Activated naive CD4-positive, alpha-beta T cell treated with anti-CD3 and anti-CD28 coated beads for 36 hours (primary cell): ENCODE measurements at regions of chr2 and their contacts with region 1.

Region 1: DNA sequence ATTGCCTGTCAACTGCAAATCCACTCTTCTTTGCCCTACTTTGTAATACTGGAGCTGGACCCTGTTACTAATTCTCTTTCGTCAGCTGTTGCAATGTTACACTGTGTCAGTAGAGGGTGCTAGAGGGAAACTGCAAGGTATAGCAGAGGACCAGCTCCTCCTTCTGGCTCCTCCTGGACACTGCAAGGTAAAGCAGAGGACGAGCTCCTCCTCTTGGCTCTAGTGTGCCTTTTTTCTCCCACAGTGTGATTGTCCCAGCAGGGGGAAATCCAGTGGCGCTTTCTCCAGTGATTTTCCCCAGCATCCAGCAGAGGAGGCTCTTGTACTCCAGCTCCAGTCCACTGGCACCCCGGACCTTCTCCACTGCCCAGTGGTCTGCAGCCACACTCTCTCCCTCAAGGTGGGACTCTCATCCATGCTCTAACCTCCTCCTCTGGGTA is 95.6 kb downstream of the CAPN13 start:
- DNase-seq: peak; percentile 95
- H3K4me3 Mint-ChIP-seq: no peak overlapping the region
- H3K27ac Mint-ChIP-seq: no peak overlapping the region
- H3K4me1 Mint-ChIP-seq: peaks cover 4% of the 10 kb centered on the region
- H3K27me3 Mint-ChIP-seq: no peaks in the 10 kb centered on the region

Region 2: DNA sequence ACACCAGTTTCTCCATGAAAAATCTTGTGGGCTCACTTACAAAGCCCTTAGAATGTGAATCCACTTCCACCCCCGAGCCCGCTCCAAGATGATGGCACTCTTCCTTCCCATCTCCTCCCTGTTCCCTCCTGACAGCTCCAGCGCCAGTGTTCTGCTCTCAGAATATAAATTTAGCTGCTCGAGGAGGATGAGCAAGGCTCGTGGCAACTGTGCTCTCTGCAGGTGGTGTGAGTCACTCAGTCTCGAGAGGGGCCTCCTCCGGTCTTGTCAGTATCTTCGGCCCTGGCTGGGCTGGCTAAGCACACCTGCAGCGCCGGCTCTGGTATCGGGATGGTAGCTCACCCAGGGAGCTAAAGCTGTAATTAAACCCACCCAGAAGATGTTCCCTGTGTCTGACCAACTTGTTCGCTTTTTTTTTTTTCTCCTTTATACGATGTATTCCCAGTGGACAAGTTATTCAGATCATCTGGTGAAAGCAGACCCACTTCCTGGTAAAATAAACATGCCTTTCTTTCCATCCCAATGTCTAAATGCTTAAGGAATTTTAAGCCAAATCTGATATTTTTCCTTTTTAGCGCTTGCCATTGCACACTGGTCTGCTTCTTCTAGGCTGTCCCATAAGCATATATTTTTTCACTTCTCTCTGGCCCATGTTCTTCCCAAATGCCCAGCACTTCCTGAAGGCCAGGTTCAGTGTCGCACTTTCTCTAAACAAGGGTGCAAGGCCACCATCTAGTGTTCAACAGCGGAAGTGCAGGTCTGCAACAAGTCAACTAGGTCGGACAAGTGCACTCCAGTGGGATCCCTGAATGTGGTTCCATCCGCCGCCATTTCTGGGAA is 596.3 kb before region 1 on chr2:
- CTCF ChIA-PET with region 1: interaction called, 18 read pairs
- intact Hi-C with region 1: no loop called
- DNase-seq: peak; percentile 85
- H3K4me3 Mint-ChIP-seq: no peak overlapping the region
- H3K27ac Mint-ChIP-seq: no peak overlapping the region
- H3K4me1 Mint-ChIP-seq: peaks cover 4% of the 10 kb centered on the region
- H3K27me3 Mint-ChIP-seq: no peaks in the 10 kb centered on the region

Region 3: DNA sequence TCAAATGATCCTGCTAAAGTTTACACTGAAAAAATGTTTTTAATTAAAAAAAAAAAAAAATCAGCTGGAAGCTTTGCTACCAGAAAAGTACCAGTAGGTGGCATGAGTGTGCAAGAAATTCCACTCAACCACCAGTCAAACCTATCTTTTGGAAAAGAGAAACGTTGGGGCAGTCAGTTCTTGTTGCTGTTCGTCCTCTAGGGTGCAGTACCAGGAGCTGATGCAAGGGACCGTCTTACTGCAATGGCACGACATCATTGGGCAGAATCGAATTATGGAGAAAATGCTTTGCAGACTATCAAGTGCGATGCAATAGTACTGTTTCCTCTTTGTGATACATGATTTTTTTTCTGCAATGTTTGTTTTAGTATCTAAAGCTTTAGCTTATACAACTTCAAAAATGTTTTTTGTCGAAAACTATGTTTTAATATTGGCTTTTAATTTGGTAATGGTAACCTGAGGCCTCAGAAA is 546.6 kb before region 1 on chr2:
- CTCF ChIA-PET with region 1: interaction called, 458 read pairs
- intact Hi-C with region 1: loop called (anchors 1 kb)
- DNase-seq: peak; percentile 77
- H3K4me3 Mint-ChIP-seq: no peak overlapping the region
- H3K27ac Mint-ChIP-seq: no peak overlapping the region
- H3K4me1 Mint-ChIP-seq: peaks cover 6% of the 10 kb centered on the region
- H3K27me3 Mint-ChIP-seq: no peaks in the 10 kb centered on the region

Region 4: GRCh38 chr2:30336978-30337841 is 374.5 kb before region 1 on chr2:
- CTCF ChIA-PET with region 1: interaction called, 11 read pairs
- intact Hi-C with region 1: loop called (anchors 1 kb)
- DNase-seq: peak; percentile 85
- H3K4me3 Mint-ChIP-seq: peak overlapping the region; percentile 58
- H3K27ac Mint-ChIP-seq: peak overlapping the region; percentile 92
- H3K4me1 Mint-ChIP-seq: peaks cover 77% of the 10 kb centered on the region
- H3K27me3 Mint-ChIP-seq: no peaks in the 10 kb centered on the region

Region 5: DNA sequence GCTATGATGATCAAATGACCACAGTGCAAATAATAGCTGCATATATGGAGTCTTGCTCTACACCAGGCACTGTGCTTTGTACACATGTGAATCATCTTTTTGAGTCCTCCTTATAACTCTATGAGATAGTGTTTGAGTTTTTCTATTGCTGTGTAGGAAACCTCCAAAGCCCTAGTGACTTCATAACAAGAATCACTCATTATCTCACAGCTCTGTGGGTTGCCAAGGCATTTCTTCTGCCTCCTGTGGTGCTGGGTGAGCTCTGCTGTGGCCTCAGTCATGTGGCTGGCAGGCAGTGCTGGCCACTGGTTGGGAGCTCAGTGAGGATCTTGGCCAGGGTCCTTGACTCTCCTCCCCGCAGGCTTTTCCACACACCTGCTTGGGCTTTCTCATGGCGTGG is 57.8 kb before region 1 on chr2:
- CTCF ChIA-PET with region 1: interaction called, 15 read pairs
- intact Hi-C with region 1: no loop called
- DNase-seq: no peak
- H3K4me3 Mint-ChIP-seq: no peak overlapping the region
- H3K27ac Mint-ChIP-seq: no peak overlapping the region
- H3K4me1 Mint-ChIP-seq: no peaks in the 10 kb centered on the region
- H3K27me3 Mint-ChIP-seq: no peaks in the 10 kb centered on the region

Region 6: GRCh38 chr2:30721668-30722647 is 10.3 kb after region 1 on chr2:
- CTCF ChIA-PET with region 1: interaction called, 33 read pairs
- intact Hi-C with region 1: no loop called
- DNase-seq: no peak
- H3K4me3 Mint-ChIP-seq: no peak overlapping the region
- H3K27ac Mint-ChIP-seq: no peak overlapping the region
- H3K4me1 Mint-ChIP-seq: no peaks in the 10 kb centered on the region
- H3K27me3 Mint-ChIP-seq: peaks cover 7% of the 10 kb centered on the region

Region 7: GRCh38 chr2:30780776-30781330 is 69.2 kb after region 1 on chr2:
- CTCF ChIA-PET with region 1: no interaction called
- intact Hi-C with region 1: no loop called
- DNase-seq: no peak
- H3K4me3 Mint-ChIP-seq: no peak overlapping the region
- H3K27ac Mint-ChIP-seq: no peak overlapping the region
- H3K4me1 Mint-ChIP-seq: peaks cover under 1% of the 10 kb centered on the region
- H3K27me3 Mint-ChIP-seq: peaks cover 5% of the 10 kb centered on the region

Region 8: DNA sequence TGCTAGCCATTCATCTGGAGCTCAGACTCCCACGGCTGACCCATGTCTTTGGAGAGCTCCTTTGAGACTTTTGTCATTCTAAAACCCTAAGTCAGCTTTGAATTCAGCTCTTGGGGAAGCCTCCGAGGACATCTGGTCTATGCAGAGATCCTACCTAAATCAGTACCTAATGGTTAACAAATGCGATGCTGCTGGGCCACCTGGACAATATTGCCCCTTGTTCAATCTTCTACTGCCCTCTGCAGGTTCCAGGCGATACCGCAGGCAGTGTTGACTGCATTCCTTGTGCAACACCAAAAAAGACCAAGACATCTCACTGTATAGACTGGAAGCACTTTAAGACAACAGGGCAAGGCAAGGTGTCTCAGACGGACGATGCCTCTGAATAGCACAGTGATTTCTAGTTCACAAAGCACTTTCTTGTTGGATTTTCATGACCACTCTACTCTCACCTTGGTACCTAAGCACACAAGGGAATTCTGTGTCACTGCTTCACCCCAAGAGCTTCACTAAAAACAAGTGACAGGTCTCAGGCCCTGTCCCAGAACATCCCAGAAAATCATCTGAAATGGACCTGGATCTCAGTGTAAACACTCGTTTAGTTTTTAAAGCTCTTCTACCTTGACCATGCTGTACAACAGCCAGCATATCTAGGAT is 622.0 kb after region 1 on chr2:
- CTCF ChIA-PET with region 1: interaction called, 31 read pairs
- intact Hi-C with region 1: loop called (anchors 1 kb)
- DNase-seq: peak; percentile 89
- H3K4me3 Mint-ChIP-seq: no peak overlapping the region
- H3K27ac Mint-ChIP-seq: no peak overlapping the region
- H3K4me1 Mint-ChIP-seq: no peaks in the 10 kb centered on the region
- H3K27me3 Mint-ChIP-seq: no peaks in the 10 kb centered on the region